ENCODE measurements at regions of chr14 and their contacts with region 1.

Region 1: GRCh38 chr14:20855652-20856291 is 35.4 kb upstream of the RNASE3 start:
- DNase-seq: peak; percentile 45
- ATAC-seq: peak; percentile 90 to 96

Region 2: GRCh38 chr14:20697273-20698017 is 158.3 kb before region 1 on chr14:
- intact Hi-C with region 1: loop called (anchors 2 kb)
- DNase-seq: peak; percentile 57
- ATAC-seq: peak; percentile 77 to 90

Region 3: GRCh38 chr14:20757965-20758364 is 97.8 kb before region 1 on chr14:
- intact Hi-C with region 1: loop called (anchors 5 kb)
- DNase-seq: peak; percentile 31
- ATAC-seq: no peak

Region 4: DNA sequence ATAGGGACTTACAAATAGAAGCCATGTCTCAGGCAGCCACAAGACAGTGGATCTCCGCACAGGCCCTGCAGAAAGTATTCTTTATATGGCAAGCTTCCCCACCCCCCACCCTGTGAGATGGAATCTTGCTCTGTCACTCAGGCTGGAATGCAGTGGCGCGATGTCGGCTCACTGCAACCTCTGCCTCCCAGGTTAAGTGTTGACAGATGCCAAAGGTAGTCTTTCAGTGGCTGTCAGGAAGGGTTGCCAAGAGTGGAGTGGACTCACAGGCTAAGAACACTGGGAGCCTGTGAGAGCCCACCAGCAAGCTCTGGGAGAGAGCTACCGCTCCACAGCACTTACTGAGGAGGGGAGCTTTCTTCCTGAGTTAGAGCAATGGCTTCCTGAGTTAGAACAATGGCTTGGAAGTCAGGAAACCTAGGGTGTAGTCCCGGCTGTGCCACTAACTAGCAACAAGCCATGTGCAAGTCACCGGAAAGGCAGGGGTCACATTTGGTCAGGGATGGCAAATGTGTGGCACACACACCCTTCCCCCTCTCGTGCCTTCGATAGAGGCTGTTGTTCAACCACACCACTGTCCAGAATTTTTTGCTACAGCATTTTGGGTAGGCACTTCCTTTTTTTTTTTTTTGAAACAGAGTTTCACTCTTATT is 55.8 kb before region 1 on chr14:
- intact Hi-C with region 1: loop called in 1 of 2 experiments (anchors 10 kb)
- DNase-seq: peak; percentile 66
- ATAC-seq: peak; percentile 58 to 64

Region 5: GRCh38 chr14:20970983-20971704 is 115.4 kb after region 1 on chr14:
- intact Hi-C with region 1: loop called in 1 of 2 experiments (anchors 5 kb)
- DNase-seq: peak; percentile 88
- ATAC-seq: peak; percentile 96

Region 6: GRCh38 chr14:21039585-21040369 is 184.0 kb after region 1 on chr14:
- intact Hi-C with region 1: loop called in 1 of 2 experiments (anchors 5 kb)
- DNase-seq: no peak
- ATAC-seq: peak; percentile 72 to 78

Region 7: GRCh38 chr14:21103710-21104447 is 248.1 kb after region 1 on chr14:
- intact Hi-C with region 1: loop called in 1 of 2 experiments (anchors 5 kb)
- DNase-seq: peak; percentile 97
- ATAC-seq: peak; percentile 93 to 96

Region 8: GRCh38 chr14:21136024-21136423 is 280.3 kb after region 1 on chr14:
- intact Hi-C with region 1: no loop called
- DNase-seq: no peak
- ATAC-seq: no peak

Measured in left cardiac atrium (tissue), 4 donors.